Right ventricle myocardium superior (tissue), 1 donor: ENCODE measurements at regions of chr3 and their contacts with region 1.

Region 1: GRCh38 chr3:149020196-149020838 is 29.0 kb downstream of the GYG1 start:
- DNase-seq: peak; percentile 53
- ATAC-seq: peak; percentile 65

Region 2: DNA sequence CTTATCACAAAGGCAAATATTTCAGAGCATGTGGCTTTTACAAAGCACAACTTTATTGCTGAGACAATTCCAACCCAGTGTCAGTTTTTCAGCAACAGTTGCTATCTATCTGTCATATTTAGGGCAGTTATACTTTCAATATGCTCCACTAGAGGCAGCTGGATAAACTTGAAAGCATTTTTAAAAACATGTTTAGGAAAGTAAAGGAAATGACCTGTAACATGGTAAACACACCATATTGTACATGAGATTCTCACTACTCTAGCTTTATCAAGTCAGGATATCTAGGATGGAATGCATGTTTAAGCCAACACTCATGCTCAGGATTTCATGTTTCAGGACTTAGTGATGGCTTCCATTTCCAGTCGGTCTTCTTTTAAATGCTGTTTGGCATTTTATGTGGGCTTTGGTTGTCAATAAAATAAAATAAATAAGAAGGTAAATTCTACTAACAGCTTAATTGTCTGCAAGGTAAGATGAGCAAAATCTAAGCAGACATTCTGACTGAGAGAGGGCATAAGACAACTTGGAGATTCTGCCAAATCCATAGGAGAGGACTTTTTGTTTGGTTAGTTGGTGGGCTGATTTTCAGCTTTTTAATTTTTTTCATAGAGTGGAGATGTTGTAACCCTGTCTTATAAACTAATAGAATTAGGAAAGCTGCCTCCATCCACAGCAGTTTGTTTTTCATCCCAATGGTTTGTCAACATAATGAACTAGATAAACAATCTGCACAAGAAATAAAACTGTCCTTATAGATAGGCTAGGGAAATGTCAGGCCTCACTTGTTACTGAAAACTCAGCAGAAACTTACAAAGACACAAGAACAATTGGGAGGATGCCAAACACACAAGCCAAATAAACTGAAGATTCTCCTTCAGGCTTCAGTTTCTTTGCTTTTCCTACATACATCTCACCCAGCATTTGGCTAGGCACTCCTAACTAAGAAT is 256.1 kb before region 1 on chr3:
- intact Hi-C with region 1: no loop called
- DNase-seq: no peak
- ATAC-seq: no peak

Region 3: DNA sequence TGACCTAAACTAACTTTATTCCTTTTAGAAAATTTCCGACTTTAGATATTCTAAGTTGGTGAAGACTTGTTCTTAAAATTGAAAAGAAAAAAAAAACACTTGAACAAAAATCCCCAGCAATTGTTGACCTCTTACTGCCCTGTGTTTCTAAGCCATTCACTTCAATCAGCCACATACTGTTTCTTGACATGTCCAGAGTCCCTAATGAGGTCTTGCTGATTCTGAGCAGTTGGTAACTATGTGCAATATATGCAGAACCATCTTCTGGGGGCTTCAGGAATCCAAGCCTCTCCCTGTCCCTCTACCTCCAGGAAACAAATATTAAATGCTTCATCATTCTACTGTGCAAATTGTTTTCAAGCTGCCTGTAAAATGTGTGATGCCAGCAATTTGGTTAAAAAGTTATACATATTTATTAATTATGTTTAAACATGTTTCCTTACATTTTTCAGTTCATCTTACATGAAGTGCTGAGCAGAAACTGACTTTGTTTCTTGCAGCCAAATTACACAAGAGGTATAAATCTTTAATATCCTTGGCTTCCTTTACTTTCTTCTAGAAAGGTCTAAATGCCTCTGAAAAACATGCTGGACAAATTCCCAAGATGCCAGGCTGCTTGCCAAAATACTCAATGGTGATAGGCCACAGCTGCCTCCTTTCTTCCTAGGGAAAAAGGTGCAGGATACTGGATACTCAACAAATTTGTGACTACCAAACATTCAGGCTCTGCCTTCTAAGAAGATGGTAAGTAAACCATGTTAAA is 48.7 kb before region 1 on chr3:
- intact Hi-C with region 1: loop called (anchors 10 kb)
- DNase-seq: no peak
- ATAC-seq: no peak